ENCODE measurements at regions of chr13 and their contacts with region 1.

Region 1: DNA sequence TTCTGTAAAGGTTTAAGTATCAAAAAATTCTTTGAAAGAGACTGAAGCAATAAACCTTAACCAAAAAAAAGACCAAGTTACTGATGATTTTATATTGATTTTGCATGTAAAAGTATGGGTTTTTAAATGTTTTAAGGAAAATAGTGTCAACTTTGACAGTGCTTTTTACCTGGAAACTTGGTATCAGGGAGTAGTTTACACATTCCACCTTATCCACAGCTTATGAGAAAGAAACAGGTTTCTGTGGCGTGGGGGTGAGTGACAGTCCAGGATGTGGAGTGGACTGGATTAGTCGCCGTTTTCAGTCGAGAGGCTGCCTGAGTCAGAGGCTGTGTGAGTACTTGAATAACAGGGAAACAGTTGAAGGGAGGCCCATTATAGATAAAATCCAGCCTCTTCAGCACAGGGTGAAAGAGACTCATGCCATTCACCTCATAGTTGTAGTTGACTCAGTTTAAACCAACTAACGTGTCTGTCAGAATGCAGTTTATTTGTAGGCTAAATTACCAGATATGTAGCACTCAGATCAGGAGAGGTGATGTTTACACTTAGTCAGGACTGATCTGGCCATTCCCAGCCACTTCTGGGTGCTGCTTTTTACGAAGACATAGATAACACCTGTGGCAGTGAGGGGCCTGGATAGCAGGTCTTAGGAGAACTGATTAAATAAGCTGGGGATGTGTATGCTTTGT is 595 bp upstream of the GPR183 start:
- DNase-seq: peak in 10 of 14 experiments; percentile 36 to 79 (median 46)
- ATAC-seq: peak; percentile 35
- H3K4me3 ChIP-seq: peak overlapping the region; percentile 83
- H3K4me3 Mint-ChIP-seq: peak overlapping the region; percentile 97
- H3K27ac ChIP-seq: peak overlapping the region; percentile 46 to 80
- H3K27ac Mint-ChIP-seq: peak overlapping the region; percentile 89
- H3K4me1 ChIP-seq: peaks cover 59% of the 10 kb centered on the region
- H3K4me1 Mint-ChIP-seq: peaks cover 75% of the 10 kb centered on the region
- H3K27me3 ChIP-seq: no peaks in the 10 kb centered on the region
- H3K27me3 Mint-ChIP-seq: no peaks in the 10 kb centered on the region
- CTCF ChIP-seq: no peak

Region 2: GRCh38 chr13:99200432-99201167 is 107.2 kb before region 1 on chr13 and contains the start of gene UBAC2:
- CTCF ChIA-PET with region 1: no interaction called
- POLR2A ChIA-PET with region 1: interaction called, 13 read pairs
- intact Hi-C with region 1: no loop called
- DNase-seq: peak; percentile 90 to 100 (median 97)
- ATAC-seq: peak; percentile 79
- H3K4me3 ChIP-seq: peak within 1 kb of the TSS; percentile 99
- H3K4me3 Mint-ChIP-seq: peak within 1 kb of the TSS; percentile 95
- H3K27ac ChIP-seq: peak within 1 kb of the TSS; percentile 97 to 99
- H3K27ac Mint-ChIP-seq: peak within 1 kb of the TSS; percentile 93
- H3K4me1 ChIP-seq: peaks cover 36% of the 10 kb centered on the region
- H3K4me1 Mint-ChIP-seq: peaks cover 67% of the 10 kb centered on the region
- H3K27me3 ChIP-seq: no peaks in the 10 kb centered on the region
- H3K27me3 Mint-ChIP-seq: no peaks in the 10 kb centered on the region
- CTCF ChIP-seq: no peak
- total RNA-seq, gene UBAC2: 59.8 to 67.4 TPM

Region 3: DNA sequence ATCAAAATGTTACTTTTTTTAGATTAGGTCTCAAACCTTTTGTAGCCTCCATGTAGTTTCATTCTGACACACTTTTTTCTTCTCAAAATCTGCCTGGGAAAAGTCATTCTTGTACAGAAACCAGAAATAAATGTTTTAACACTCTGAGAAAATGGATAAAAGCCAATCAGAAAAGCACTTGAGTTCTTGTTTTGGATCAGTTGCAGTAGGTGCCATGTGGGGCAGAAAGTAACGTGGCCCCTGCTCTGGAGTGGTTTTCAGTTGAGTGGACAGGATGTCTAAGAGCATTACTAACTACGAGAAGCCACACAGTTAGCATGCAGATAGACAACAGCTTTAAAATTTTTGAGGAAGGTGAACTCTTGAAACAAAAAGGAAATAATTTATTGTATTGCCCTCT is 19.7 kb before region 1 on chr13:
- CTCF ChIA-PET with region 1: no interaction called
- POLR2A ChIA-PET with region 1: interaction called, 21 read pairs
- intact Hi-C with region 1: no loop called
- DNase-seq: no peak
- ATAC-seq: no peak
- H3K4me3 ChIP-seq: no peak overlapping the region
- H3K4me3 Mint-ChIP-seq: peak overlapping the region; percentile 55
- H3K27ac ChIP-seq: no peak overlapping the region
- H3K27ac Mint-ChIP-seq: peak overlapping the region; percentile 100
- H3K4me1 ChIP-seq: peaks cover 72% of the 10 kb centered on the region
- H3K4me1 Mint-ChIP-seq: peaks cover 96% of the 10 kb centered on the region
- H3K27me3 ChIP-seq: no peaks in the 10 kb centered on the region
- H3K27me3 Mint-ChIP-seq: no peaks in the 10 kb centered on the region
- CTCF ChIP-seq: no peak

Region 4: GRCh38 chr13:99347911-99348451 is 40.2 kb after region 1 on chr13:
- CTCF ChIA-PET with region 1: interaction called, 11 read pairs
- POLR2A ChIA-PET with region 1: interaction called, 220 read pairs
- intact Hi-C with region 1: loop called in 1 of 2 experiments (anchors 1 kb)
- DNase-seq: no peak
- ATAC-seq: no peak
- H3K4me3 ChIP-seq: no peak overlapping the region
- H3K4me3 Mint-ChIP-seq: no peak overlapping the region
- H3K27ac ChIP-seq: peak overlapping the region in 1 of 2 donors; percentile 38
- H3K27ac Mint-ChIP-seq: peak overlapping the region; percentile 97
- H3K4me1 ChIP-seq: peaks cover 84% of the 10 kb centered on the region
- H3K4me1 Mint-ChIP-seq: peaks cover 92% of the 10 kb centered on the region
- H3K27me3 ChIP-seq: no peaks in the 10 kb centered on the region
- H3K27me3 Mint-ChIP-seq: no peaks in the 10 kb centered on the region
- CTCF ChIP-seq: no peak

Region 5: GRCh38 chr13:99374994-99375737 is 67.4 kb after region 1 on chr13:
- CTCF ChIA-PET with region 1: interaction called, 3 read pairs
- POLR2A ChIA-PET with region 1: interaction called, 63 read pairs
- intact Hi-C with region 1: no loop called
- DNase-seq: peak in 11 of 14 experiments; percentile 44 to 92 (median 70)
- ATAC-seq: peak; percentile 86
- H3K4me3 ChIP-seq: no peak overlapping the region
- H3K4me3 Mint-ChIP-seq: peak overlapping the region; percentile 8
- H3K27ac ChIP-seq: peak overlapping the region; percentile 58 to 75
- H3K27ac Mint-ChIP-seq: peak overlapping the region; percentile 97
- H3K4me1 ChIP-seq: peaks cover 74% of the 10 kb centered on the region
- H3K4me1 Mint-ChIP-seq: peaks cover 93% of the 10 kb centered on the region
- H3K27me3 ChIP-seq: no peaks in the 10 kb centered on the region
- H3K27me3 Mint-ChIP-seq: no peaks in the 10 kb centered on the region
- CTCF ChIP-seq: no peak

Region 6: GRCh38 chr13:99417201-99418102 is 109.7 kb after region 1 on chr13:
- CTCF ChIA-PET with region 1: interaction called, 3 read pairs
- POLR2A ChIA-PET with region 1: interaction called, 13 read pairs
- intact Hi-C with region 1: no loop called
- DNase-seq: peak in 6 of 14 experiments; percentile 41 to 66 (median 52)
- ATAC-seq: peak; percentile 30
- H3K4me3 ChIP-seq: peak overlapping the region; percentile 52
- H3K4me3 Mint-ChIP-seq: no peak overlapping the region
- H3K27ac ChIP-seq: peak overlapping the region; percentile 59 to 76
- H3K27ac Mint-ChIP-seq: no peak overlapping the region
- H3K4me1 ChIP-seq: peaks cover 88% of the 10 kb centered on the region
- H3K4me1 Mint-ChIP-seq: peaks cover 62% of the 10 kb centered on the region
- H3K27me3 ChIP-seq: no peaks in the 10 kb centered on the region
- H3K27me3 Mint-ChIP-seq: no peaks in the 10 kb centered on the region
- CTCF ChIP-seq: no peak

Measured in CD4-positive, alpha-beta T cell (primary cell).